B cell (primary cell): ENCODE measurements at regions of chr5 and their contacts with region 1.

Region 1: GRCh38 chr5:138737494-138738265 is 15.5 kb upstream of the CTNNA1 start:
- DNase-seq: no peak
- ATAC-seq: no peak
- H3K4me3 ChIP-seq: no peak overlapping the region
- H3K4me3 Mint-ChIP-seq: no peak overlapping the region
- H3K27ac ChIP-seq: no peak overlapping the region
- H3K27ac Mint-ChIP-seq: no peak overlapping the region
- H3K4me1 ChIP-seq: peaks cover 3 to 9% of the 10 kb centered on the region in 2 donors
- H3K4me1 Mint-ChIP-seq: peaks cover 9% of the 10 kb centered on the region
- H3K27me3 ChIP-seq: no peaks in the 10 kb centered on the region
- H3K27me3 Mint-ChIP-seq: no peaks in the 10 kb centered on the region
- CTCF ChIP-seq: no peak

Region 2: GRCh38 chr5:138752951-138753793 is 15.5 kb after region 1 on chr5 and contains the start of gene CTNNA1:
- CTCF ChIA-PET with region 1: interaction called, 9 read pairs
- POLR2A ChIA-PET with region 1: no interaction called
- intact Hi-C with region 1: loop called (anchors 1 kb)
- DNase-seq: peak; percentile 75
- ATAC-seq: peak; percentile 78
- H3K4me3 ChIP-seq: peak within 1 kb of the TSS; percentile 48 to 89 (median 74)
- H3K4me3 Mint-ChIP-seq: peak within 1 kb of the TSS; percentile 85
- H3K27ac ChIP-seq: peak within 1 kb of the TSS in 1 of 2 donors; percentile 70
- H3K27ac Mint-ChIP-seq: peak within 1 kb of the TSS; percentile 74
- H3K4me1 ChIP-seq: peaks cover 6 to 17% of the 10 kb centered on the region in 2 donors
- H3K4me1 Mint-ChIP-seq: peaks cover 28% of the 10 kb centered on the region
- H3K27me3 ChIP-seq: no peaks in the 10 kb centered on the region
- H3K27me3 Mint-ChIP-seq: no peaks in the 10 kb centered on the region
- CTCF ChIP-seq: no peak
- total RNA-seq, gene CTNNA1: 75.9 and 96.0 TPM in 2 replicates